Activated CD4-positive, alpha-beta T cell treated with anti-CD3 and anti-CD28 coated beads, Interleukin-2, amount 10 ng/mL, durations not matched to agents 24 days and 14 days (primary cell): ENCODE measurements at regions of chr10 and their contacts with region 1.

Region 1: GRCh38 chr10:79242620-79243152 is 104.6 kb upstream of the PPIF start:
- DNase-seq: peak; percentile 91
- H3K4me3 Mint-ChIP-seq: peak overlapping the region; percentile 86
- H3K27ac Mint-ChIP-seq: peak overlapping the region; percentile 89
- H3K4me1 Mint-ChIP-seq: peaks cover 57% of the 10 kb centered on the region
- H3K27me3 Mint-ChIP-seq: no peaks in the 10 kb centered on the region

Region 2: GRCh38 chr10:78763651-78764311 is 478.9 kb before region 1 on chr10:
- intact Hi-C with region 1: loop called (anchors 5 kb)
- DNase-seq: peak; percentile 63
- H3K4me3 Mint-ChIP-seq: no peak overlapping the region
- H3K27ac Mint-ChIP-seq: peak overlapping the region; percentile 91
- H3K4me1 Mint-ChIP-seq: peaks cover 17% of the 10 kb centered on the region
- H3K27me3 Mint-ChIP-seq: no peaks in the 10 kb centered on the region

Region 3: DNA sequence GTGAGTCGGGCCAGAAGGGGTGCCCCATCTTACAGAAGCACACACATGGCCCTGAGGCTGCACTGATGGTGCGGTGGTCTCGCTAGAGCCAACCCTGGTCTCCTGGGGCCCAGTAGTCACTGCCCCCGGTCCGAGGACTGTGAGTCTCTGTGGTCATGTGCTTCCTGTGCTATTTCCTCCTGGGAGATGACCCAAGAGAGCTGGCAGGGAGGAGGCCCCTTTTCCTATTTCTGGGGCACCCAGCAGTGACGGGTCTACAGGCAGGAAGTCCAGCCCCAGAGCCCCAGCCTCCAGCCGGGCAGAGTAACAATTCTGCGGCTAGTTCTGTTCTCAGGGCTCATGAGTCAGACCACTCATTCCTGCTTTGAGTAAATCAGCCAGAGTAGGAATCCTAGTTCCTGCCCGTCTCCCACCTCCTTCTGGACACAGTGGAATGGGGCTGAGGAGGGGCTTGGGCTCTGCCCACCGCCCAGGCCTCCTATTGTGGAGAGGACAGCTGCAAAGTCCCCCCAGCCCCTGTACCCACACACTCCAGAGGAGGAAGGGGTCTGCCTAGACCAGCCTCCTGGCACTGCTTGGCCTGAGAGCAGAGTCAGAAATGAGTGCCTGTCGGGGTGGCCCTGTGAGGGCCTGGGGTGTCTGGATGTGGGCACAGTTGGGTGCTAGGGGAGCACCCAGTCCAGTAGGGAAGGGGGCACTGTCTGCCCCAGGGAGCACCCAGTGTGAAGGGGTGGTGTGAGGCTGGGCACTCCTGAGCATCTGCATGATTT is 24.0 kb after region 1 on chr10:
- intact Hi-C with region 1: loop called (anchors 2 kb)
- DNase-seq: no peak
- H3K4me3 Mint-ChIP-seq: no peak overlapping the region
- H3K27ac Mint-ChIP-seq: peak overlapping the region; percentile 63
- H3K4me1 Mint-ChIP-seq: peaks cover 37% of the 10 kb centered on the region
- H3K27me3 Mint-ChIP-seq: no peaks in the 10 kb centered on the region

Region 4: DNA sequence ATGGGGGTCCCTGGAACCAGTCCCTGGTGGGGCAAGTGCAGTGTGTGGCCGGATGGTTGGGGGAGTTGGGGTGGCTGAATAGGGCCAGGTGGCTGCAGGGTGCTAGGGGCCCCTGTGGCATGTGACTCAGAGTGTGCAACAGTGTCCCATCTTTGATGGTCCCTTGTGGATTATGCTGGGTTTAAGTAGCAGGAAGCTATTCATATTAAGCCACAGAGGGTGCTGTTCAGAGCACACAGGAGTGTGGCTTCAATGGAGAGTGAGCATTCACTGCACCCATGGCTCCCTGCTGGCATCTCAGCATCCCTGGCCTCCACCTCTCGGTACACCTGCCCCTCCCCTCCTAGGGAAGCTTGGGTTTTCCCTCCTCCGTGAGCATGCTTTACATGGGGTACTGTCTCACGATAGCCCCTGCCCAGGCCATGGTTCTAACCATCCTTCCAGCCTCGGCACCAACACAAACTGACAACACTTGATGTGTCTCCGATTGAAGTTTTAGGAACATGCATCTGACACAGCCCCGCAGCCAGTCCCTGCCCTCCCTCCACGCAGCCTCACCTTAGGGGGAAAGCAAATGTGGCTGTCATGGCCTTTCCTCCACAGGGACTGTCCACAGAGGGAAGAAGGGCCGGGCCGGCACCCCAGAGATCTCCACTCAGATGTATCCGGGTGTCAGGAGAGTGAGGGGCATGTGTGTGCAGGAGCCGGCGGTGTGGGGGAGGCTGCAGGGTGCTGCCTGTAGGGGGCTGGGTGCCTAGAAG is 74.2 kb after region 1 on chr10:
- intact Hi-C with region 1: loop called (anchors 1 kb)
- DNase-seq: peak; percentile 75
- H3K4me3 Mint-ChIP-seq: peak overlapping the region; percentile 76
- H3K27ac Mint-ChIP-seq: peak overlapping the region; percentile 90
- H3K4me1 Mint-ChIP-seq: peaks cover 59% of the 10 kb centered on the region
- H3K27me3 Mint-ChIP-seq: peaks cover 3% of the 10 kb centered on the region

Region 5: DNA sequence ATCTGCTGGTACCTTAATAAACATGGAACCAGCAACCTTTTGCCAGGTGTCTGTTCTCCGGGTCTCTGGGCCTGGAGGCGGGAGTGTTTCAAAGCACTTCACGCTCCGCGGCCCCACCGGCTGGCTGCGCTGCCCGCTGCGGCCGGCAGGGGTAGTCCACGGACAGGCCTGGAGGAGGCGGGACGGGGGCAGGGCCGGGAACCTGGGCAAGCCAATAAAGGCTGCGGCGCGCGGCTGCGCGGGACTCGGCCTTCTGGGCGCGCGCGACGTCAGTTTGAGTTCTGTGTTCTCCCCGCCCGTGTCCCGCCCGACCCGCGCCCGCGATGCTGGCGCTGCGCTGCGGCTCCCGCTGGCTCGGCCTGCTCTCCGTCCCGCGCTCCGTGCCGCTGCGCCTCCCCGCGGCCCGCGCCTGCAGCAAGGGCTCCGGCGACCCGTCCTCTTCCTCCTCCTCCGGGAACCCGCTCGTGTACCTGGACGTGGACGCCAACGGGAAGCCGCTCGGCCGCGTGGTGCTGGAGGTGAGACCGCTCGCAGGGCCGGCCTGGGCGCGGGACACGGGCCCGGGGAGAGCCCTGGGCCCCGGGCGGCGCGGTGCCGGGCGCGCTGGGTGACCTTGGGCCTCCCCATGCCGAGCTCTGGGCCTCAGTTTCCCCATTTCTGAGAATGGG is 104.7 kb after region 1 on chr10 and contains the start of gene PPIF:
- intact Hi-C with region 1: loop called (anchors 2 kb)
- DNase-seq: peak; percentile 99
- H3K4me3 Mint-ChIP-seq: peak within 1 kb of the TSS; percentile 93
- H3K27ac Mint-ChIP-seq: peak within 1 kb of the TSS; percentile 94
- H3K4me1 Mint-ChIP-seq: peaks cover 47% of the 10 kb centered on the region
- H3K27me3 Mint-ChIP-seq: no peaks in the 10 kb centered on the region
- total RNA-seq, gene PPIF: 157 and 161 TPM in 2 replicates

Region 6: GRCh38 chr10:80205478-80206276 is 963.0 kb after region 1 on chr10 and contains the start of gene ANXA11:
- intact Hi-C with region 1: loop called (anchors 10 kb)
- DNase-seq: peak; percentile 94
- H3K4me3 Mint-ChIP-seq: peak within 1 kb of the TSS; percentile 84
- H3K27ac Mint-ChIP-seq: peak within 1 kb of the TSS; percentile 94
- H3K4me1 Mint-ChIP-seq: peaks cover 45% of the 10 kb centered on the region
- H3K27me3 Mint-ChIP-seq: no peaks in the 10 kb centered on the region
- total RNA-seq, gene ANXA11: 223 and 232 TPM in 2 replicates